GM12878 (cell line): ENCODE measurements at regions of chr11 and their contacts with region 1.

Region 1: DNA sequence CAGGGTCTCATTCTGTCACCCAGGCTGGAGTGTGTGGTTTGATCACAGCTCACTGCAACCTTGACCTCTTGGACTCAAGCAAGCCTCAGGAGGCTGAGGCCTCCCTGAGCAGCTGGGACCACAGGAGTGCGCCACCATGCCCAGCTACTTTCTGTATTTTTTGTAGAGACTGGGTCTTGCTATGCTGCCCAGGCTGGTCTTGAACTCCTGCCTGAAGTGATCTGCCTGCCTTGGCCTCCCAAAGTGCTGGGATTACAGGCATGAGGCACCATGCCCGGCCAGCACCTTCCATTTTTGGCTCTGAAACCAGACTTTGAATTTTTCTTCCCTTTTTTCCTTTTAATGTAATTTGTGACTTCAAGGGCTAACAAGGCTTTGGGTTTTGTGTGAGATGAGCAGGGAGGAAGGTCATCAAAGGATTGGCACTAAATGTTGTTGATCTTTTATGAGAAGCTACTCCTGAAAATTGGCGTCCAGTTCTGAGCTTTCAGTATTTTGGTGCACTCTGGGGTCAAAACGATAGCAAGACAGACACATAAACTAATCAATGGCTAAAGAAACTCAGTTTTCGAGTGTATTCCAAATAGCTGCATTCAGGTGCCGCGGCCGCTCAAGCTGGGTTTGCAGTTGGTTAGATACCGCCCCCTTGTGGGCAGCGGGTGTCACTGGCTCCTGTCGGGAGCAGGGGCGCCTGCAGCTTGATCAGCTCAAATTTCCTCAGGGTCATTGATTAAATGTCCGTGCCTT is 51.9 kb upstream of the CLMP start:
- DNase-seq: no peak
- ATAC-seq: peak; percentile 96
- H3K4me3 ChIP-seq: no peak overlapping the region
- H3K27ac ChIP-seq: no peak overlapping the region
- H3K4me1 ChIP-seq: no peaks in the 10 kb centered on the region; the same call in 1 of the 2 replicates
- H3K27me3 ChIP-seq: peaks cover 0 to 2% of the 10 kb centered on the region in 2 experiments; a peak in 1 of 4 replicates
- CTCF ChIP-seq: peak; percentile 96 to 98 (median 98)
- EP300 ChIP-seq: no peak
- POLR2A ChIP-seq: no peak
- RAD21 ChIP-seq: peak; percentile 93

Region 2: DNA sequence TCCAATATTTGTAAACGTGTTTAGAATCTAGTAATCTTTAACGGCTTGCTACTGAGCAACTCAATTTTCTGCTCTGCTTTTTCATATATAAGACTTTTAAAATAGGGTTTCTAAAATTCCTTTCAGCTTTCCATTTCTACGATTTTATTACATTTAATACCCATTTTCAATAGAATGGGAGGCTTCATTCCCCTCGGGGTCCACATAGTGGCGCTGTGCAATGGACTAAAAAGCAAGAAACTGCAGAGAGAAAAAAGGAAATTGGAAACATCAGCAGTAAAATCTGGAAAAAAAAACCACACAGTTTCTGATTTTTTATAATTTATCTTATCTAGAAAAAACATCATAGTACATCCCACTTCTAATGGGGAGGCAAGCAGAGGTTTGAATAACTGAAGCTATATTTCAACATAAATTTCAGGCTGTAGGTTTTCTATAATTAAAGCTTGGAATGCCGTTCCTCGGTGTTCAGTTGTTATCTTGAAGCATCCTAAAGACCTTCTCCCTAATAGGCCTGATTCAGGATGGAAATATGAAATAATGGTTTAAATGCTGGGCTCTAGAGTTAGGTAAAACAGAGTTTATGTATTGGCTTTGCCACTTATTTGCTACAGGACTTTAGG is 383.1 kb before region 1 on chr11:
- CTCF ChIA-PET with region 1: interaction called, 14 read pairs
- POLR2A ChIA-PET with region 1: no interaction called
- RAD21 ChIA-PET with region 1: interaction called, 5 read pairs
- SMC1A ChIA-PET with region 1: interaction called, 4 read pairs
- in situ Hi-C with region 1: no loop called
- intact Hi-C with region 1: no loop called
- DNase-seq: no peak
- ATAC-seq: peak; percentile 68
- H3K4me3 ChIP-seq: no peak overlapping the region
- H3K27ac ChIP-seq: no peak overlapping the region
- H3K4me1 ChIP-seq: peaks cover 3% of the 10 kb centered on the region
- H3K27me3 ChIP-seq: peaks cover 0 to 3% of the 10 kb centered on the region in 2 experiments; a peak in 1 of 4 replicates
- CTCF ChIP-seq: peak; percentile 82 to 83 (median 82)
- EP300 ChIP-seq: no peak
- POLR2A ChIP-seq: no peak
- RAD21 ChIP-seq: peak; percentile 92

Region 3: GRCh38 chr11:123103326-123103980 is 143.5 kb before region 1 on chr11:
- CTCF ChIA-PET with region 1: interaction called, 117 read pairs
- POLR2A ChIA-PET with region 1: no interaction called
- RAD21 ChIA-PET with region 1: interaction called, 44 read pairs
- SMC1A ChIA-PET with region 1: interaction called, 17 read pairs
- in situ Hi-C with region 1: no loop called
- intact Hi-C with region 1: no loop called
- DNase-seq: no peak
- ATAC-seq: peak; percentile 82
- H3K4me3 ChIP-seq: no peak overlapping the region
- H3K27ac ChIP-seq: no peak overlapping the region
- H3K4me1 ChIP-seq: no peaks in the 10 kb centered on the region
- H3K27me3 ChIP-seq: peaks cover 0 to 2% of the 10 kb centered on the region in 2 experiments; a peak in 1 of 4 replicates
- CTCF ChIP-seq: peak; percentile 49 to 59 (median 58); a peak in 5 of 6 replicates
- EP300 ChIP-seq: no peak
- POLR2A ChIP-seq: no peak
- RAD21 ChIP-seq: peak; percentile 66

Region 4: DNA sequence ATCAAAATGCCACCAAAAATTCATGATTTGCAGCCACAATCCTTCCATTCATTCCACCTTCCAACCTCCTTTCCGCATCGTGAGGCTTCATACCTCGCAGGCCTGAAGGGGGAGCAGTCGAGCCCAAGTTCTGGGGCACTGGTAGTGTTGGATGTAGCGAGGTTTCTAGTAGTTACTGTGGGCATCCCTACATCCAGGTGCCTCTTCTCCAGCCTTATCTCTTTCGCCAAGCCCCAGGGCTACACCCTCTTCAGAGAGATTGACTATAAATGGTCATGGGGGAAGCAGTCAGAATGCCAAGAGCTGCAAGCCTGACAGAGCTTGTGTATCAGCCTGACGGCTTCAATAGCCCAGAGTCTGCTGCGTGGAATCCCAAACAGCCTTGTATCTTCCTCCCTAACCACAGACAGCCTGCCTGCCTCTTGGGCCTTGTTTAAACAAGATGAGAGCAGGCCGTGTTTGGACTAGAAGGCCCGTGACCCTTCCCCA is 80.8 kb before region 1 on chr11:
- CTCF ChIA-PET with region 1: interaction called, 65 read pairs
- POLR2A ChIA-PET with region 1: interaction called, 3 read pairs
- RAD21 ChIA-PET with region 1: interaction called, 11 read pairs
- SMC1A ChIA-PET with region 1: interaction called, 11 read pairs
- in situ Hi-C with region 1: no loop called
- intact Hi-C with region 1: loop called (anchors 5 kb)
- DNase-seq: no peak
- ATAC-seq: peak; percentile 68
- H3K4me3 ChIP-seq: no peak overlapping the region
- H3K27ac ChIP-seq: no peak overlapping the region
- H3K4me1 ChIP-seq: no peaks in the 10 kb centered on the region
- H3K27me3 ChIP-seq: peaks cover 0 to 3% of the 10 kb centered on the region in 2 experiments; a peak in 3 of 4 replicates
- CTCF ChIP-seq: peak; percentile 38 to 64 (median 59)
- EP300 ChIP-seq: no peak
- POLR2A ChIP-seq: no peak
- RAD21 ChIP-seq: no peak

Region 5: DNA sequence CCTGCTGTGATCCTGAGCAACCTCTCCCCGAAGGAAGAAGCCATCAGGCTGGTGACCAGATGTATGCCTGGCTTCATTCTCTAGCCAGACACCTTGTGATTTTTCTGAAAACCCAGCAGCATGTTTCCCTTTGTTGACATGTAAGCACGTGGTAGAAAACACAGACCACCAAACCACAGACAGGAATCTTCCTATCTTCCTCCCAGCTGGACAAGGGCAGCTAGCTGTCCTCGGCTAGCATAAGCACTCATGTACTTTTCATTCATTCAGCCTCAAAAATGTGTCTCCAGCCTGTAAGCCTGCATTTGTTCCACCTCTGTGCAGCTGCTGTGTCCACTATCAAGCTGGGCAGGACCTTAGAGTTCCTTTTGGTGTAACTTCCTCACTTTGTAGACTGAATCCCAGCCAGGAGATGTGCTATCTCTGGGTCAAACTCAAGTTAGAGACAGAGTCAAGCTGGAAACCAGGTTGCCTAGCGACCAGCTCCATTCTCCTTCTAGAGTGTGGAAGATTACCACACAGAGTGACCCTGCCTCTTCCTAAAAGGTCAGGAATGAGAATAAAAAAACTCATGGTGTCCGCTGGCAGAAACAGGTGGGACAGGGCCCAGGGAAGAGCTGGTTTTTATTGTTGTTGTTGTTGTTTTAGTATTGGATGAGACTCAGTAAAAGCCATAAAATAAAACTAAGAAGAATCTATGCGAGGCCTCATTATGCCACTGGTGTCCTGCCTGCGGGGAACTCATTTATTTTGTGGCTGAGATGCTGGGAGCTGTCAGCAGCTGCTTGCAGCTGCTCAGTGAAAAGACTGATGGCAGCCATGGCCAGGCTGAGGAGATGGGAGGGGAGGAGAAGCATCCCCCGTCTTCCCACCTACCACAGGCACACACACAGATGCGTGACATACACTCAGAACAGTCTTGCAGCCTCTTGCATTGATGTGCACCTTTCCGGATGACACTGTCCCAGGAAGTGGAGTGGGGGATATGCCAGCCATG is 44.5 kb before region 1 on chr11:
- CTCF ChIA-PET with region 1: interaction called, 13 read pairs
- POLR2A ChIA-PET with region 1: no interaction called
- RAD21 ChIA-PET with region 1: no interaction called
- SMC1A ChIA-PET with region 1: no interaction called
- in situ Hi-C with region 1: no loop called
- intact Hi-C with region 1: no loop called
- DNase-seq: no peak
- ATAC-seq: no peak
- H3K4me3 ChIP-seq: no peak overlapping the region
- H3K27ac ChIP-seq: no peak overlapping the region
- H3K4me1 ChIP-seq: no peaks in the 10 kb centered on the region
- H3K27me3 ChIP-seq: peaks cover 7 to 16% of the 10 kb centered on the region in 2 experiments
- CTCF ChIP-seq: no peak
- EP300 ChIP-seq: no peak
- POLR2A ChIP-seq: no peak
- RAD21 ChIP-seq: no peak

Region 6: GRCh38 chr11:123261345-123262106 is 14.6 kb after region 1 on chr11:
- CTCF ChIA-PET with region 1: interaction called, 62 read pairs
- POLR2A ChIA-PET with region 1: interaction called, 3 read pairs
- RAD21 ChIA-PET with region 1: interaction called, 18 read pairs
- SMC1A ChIA-PET with region 1: interaction called, 12 read pairs
- in situ Hi-C with region 1: no loop called
- intact Hi-C with region 1: no loop called
- DNase-seq: no peak
- ATAC-seq: peak; percentile 74
- H3K4me3 ChIP-seq: no peak overlapping the region
- H3K27ac ChIP-seq: no peak overlapping the region
- H3K4me1 ChIP-seq: peaks cover 28% of the 10 kb centered on the region
- H3K27me3 ChIP-seq: no peaks in the 10 kb centered on the region
- CTCF ChIP-seq: peak; percentile 69 to 95 (median 85)
- EP300 ChIP-seq: no peak
- POLR2A ChIP-seq: no peak
- RAD21 ChIP-seq: peak; percentile 46